Naive thymus-derived CD4-positive, alpha-beta T cell (primary cell): ENCODE measurements at regions of chr19 and their contacts with region 1.

Region 1: GRCh38 chr19:17282488-17283255 is 971 bp downstream of the ANKLE1 start:
- DNase-seq: peak; percentile 58 to 86 (median 70)
- ATAC-seq: peak; percentile 97
- H3K4me3 ChIP-seq: peak overlapping the region; percentile 62
- H3K4me3 Mint-ChIP-seq: peak overlapping the region; percentile 75 to 90 (median 81)
- H3K27ac ChIP-seq: no peak overlapping the region
- H3K27ac Mint-ChIP-seq: peak overlapping the region in 3 of 9 donors; percentile 56 to 72 (median 62)
- H3K4me1 ChIP-seq: peaks cover 0 to 8% of the 10 kb centered on the region in 2 donors
- H3K4me1 Mint-ChIP-seq: peaks cover 0 to 9% (median 3%) of the 10 kb centered on the region in 7 donors
- H3K27me3 ChIP-seq: no peaks in the 10 kb centered on the region
- H3K27me3 Mint-ChIP-seq: peaks cover 0 to 4% (median 0%) of the 10 kb centered on the region in 5 donors

Region 2: GRCh38 chr19:16714702-16715287 is 567.9 kb before region 1 on chr19:
- CTCF ChIA-PET with region 1: no interaction called
- POLR2A ChIA-PET with region 1: no interaction called
- intact Hi-C with region 1: loop called in 1 of 2 experiments (anchors 5 kb)
- DNase-seq: peak in 7 of 9 donors; percentile 10 to 46 (median 22)
- ATAC-seq: peak; percentile 40
- H3K4me3 ChIP-seq: no peak overlapping the region
- H3K4me3 Mint-ChIP-seq: no peak overlapping the region
- H3K27ac ChIP-seq: no peak overlapping the region
- H3K27ac Mint-ChIP-seq: no peak overlapping the region
- H3K4me1 ChIP-seq: no peaks in the 10 kb centered on the region
- H3K4me1 Mint-ChIP-seq: peaks cover 0 to 3% (median 0%) of the 10 kb centered on the region in 7 donors
- H3K27me3 ChIP-seq: no peaks in the 10 kb centered on the region
- H3K27me3 Mint-ChIP-seq: peaks cover 0 to 12% (median 7%) of the 10 kb centered on the region in 5 donors

Region 3: GRCh38 chr19:16778796-16779411 is 503.8 kb before region 1 on chr19:
- CTCF ChIA-PET with region 1: no interaction called
- POLR2A ChIA-PET with region 1: no interaction called
- intact Hi-C with region 1: loop called (anchors 2 to 5 kb)
- DNase-seq: peak in 8 of 9 donors; percentile 10 to 41 (median 36)
- ATAC-seq: peak; percentile 82
- H3K4me3 ChIP-seq: no peak overlapping the region
- H3K4me3 Mint-ChIP-seq: no peak overlapping the region
- H3K27ac ChIP-seq: no peak overlapping the region
- H3K27ac Mint-ChIP-seq: no peak overlapping the region
- H3K4me1 ChIP-seq: no peaks in the 10 kb centered on the region
- H3K4me1 Mint-ChIP-seq: no peaks in the 10 kb centered on the region
- H3K27me3 ChIP-seq: no peaks in the 10 kb centered on the region
- H3K27me3 Mint-ChIP-seq: peaks cover 2 to 25% (median 13%) of the 10 kb centered on the region in 5 donors

Region 4: GRCh38 chr19:17205237-17206140 is 77.2 kb before region 1 on chr19:
- CTCF ChIA-PET with region 1: interaction called, 3 read pairs
- POLR2A ChIA-PET with region 1: no interaction called
- intact Hi-C with region 1: loop called (anchors 1 kb)
- DNase-seq: peak; percentile 41 to 68 (median 54)
- ATAC-seq: peak; percentile 82
- H3K4me3 ChIP-seq: no peak overlapping the region
- H3K4me3 Mint-ChIP-seq: no peak overlapping the region
- H3K27ac ChIP-seq: no peak overlapping the region
- H3K27ac Mint-ChIP-seq: peak overlapping the region in 1 of 9 donors; percentile 38
- H3K4me1 ChIP-seq: no peaks in the 10 kb centered on the region
- H3K4me1 Mint-ChIP-seq: peaks cover 0 to 16% (median 0%) of the 10 kb centered on the region in 7 donors
- H3K27me3 ChIP-seq: no peaks in the 10 kb centered on the region
- H3K27me3 Mint-ChIP-seq: no peaks in the 10 kb centered on the region

Region 5: DNA sequence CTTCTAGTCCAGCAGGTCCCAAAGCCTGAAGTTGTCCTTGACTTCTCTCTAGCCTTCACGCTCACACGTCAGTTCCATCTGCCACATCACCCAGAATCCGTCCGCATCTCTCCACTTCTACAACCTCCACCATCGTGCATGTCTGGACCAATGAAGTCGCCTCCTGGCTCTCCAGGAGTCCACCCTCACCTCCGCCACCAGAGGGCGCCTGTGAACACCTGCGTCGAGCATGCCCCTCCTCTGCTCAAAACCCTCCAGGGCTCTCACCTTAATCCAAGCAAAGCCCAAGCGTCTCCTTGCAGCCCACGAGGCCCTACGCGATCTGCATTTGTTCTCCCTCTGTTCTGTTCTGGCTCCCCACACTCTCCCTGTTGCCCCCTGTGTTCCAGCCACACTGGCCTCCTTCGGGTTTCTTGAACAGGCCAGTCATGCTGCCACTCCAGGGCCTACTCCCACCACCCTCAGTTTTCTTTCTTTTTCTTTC is 21.8 kb before region 1 on chr19:
- CTCF ChIA-PET with region 1: interaction called, 36 read pairs
- POLR2A ChIA-PET with region 1: interaction called, 11 read pairs
- intact Hi-C with region 1: loop called (anchors 1 kb)
- DNase-seq: peak; percentile 76 to 90 (median 86)
- ATAC-seq: peak; percentile 100
- H3K4me3 ChIP-seq: no peak overlapping the region
- H3K4me3 Mint-ChIP-seq: no peak overlapping the region
- H3K27ac ChIP-seq: no peak overlapping the region
- H3K27ac Mint-ChIP-seq: peak overlapping the region in 3 of 9 donors; percentile 2 to 82 (median 24)
- H3K4me1 ChIP-seq: peaks cover 0 to 10% of the 10 kb centered on the region in 2 donors
- H3K4me1 Mint-ChIP-seq: peaks cover 5 to 14% (median 13%) of the 10 kb centered on the region in 7 donors
- H3K27me3 ChIP-seq: no peaks in the 10 kb centered on the region
- H3K27me3 Mint-ChIP-seq: no peaks in the 10 kb centered on the region

Region 6: DNA sequence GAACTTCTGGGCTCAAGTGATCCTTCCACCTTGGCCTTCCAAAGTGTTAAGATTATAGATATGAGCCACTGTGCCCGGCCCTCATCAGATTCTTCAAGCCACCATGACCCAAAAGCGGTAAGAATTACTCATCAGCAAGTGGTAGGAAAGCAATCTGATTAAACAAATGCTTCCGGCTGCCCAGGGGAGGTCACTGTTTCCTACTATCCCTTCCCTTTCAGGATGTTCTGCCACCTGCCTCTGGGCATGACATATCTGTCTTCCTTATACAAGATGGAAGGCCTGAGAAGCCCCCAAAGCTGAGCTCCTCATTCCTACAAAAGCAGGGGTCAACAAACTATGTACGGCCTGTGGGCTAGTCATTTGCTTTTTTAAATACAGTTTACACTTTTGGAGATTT is 13.6 kb after region 1 on chr19:
- CTCF ChIA-PET with region 1: no interaction called
- POLR2A ChIA-PET with region 1: no interaction called
- intact Hi-C with region 1: no loop called
- DNase-seq: no peak
- ATAC-seq: no peak
- H3K4me3 ChIP-seq: no peak overlapping the region
- H3K4me3 Mint-ChIP-seq: no peak overlapping the region
- H3K27ac ChIP-seq: no peak overlapping the region
- H3K27ac Mint-ChIP-seq: no peak overlapping the region
- H3K4me1 ChIP-seq: peaks cover 0 to 5% of the 10 kb centered on the region in 2 donors
- H3K4me1 Mint-ChIP-seq: peaks cover under 1 to 7% (median 5%) of the 10 kb centered on the region in 7 donors
- H3K27me3 ChIP-seq: no peaks in the 10 kb centered on the region
- H3K27me3 Mint-ChIP-seq: no peaks in the 10 kb centered on the region

Region 7: GRCh38 chr19:17340302-17340870 is 57.7 kb after region 1 on chr19:
- CTCF ChIA-PET with region 1: no interaction called
- POLR2A ChIA-PET with region 1: no interaction called
- intact Hi-C with region 1: no loop called
- DNase-seq: no peak
- ATAC-seq: no peak
- H3K4me3 ChIP-seq: no peak overlapping the region
- H3K4me3 Mint-ChIP-seq: peak overlapping the region in 2 of 10 donors; percentile 25 to 40
- H3K27ac ChIP-seq: no peak overlapping the region
- H3K27ac Mint-ChIP-seq: no peak overlapping the region
- H3K4me1 ChIP-seq: peaks cover 6 to 10% of the 10 kb centered on the region in 2 donors
- H3K4me1 Mint-ChIP-seq: peaks cover 5 to 29% (median 10%) of the 10 kb centered on the region in 7 donors
- H3K27me3 ChIP-seq: no peaks in the 10 kb centered on the region
- H3K27me3 Mint-ChIP-seq: no peaks in the 10 kb centered on the region